ENCODE measurements at regions of chr1 and their contacts with region 1.

Region 1: GRCh38 chr1:115138968-115139367 is 49.7 kb upstream of the TSPAN2 start:
- DNase-seq: peak in 1 of 2 donors; percentile 92
- H3K4me3 ChIP-seq: no peak overlapping the region
- H3K27ac ChIP-seq: no peak overlapping the region
- H3K4me1 ChIP-seq: peaks cover 12% of the 10 kb centered on the region
- H3K27me3 ChIP-seq: no peaks in the 10 kb centered on the region
- CTCF ChIP-seq: peak; percentile 68 to 84 (median 83)
- POLR2A ChIP-seq: no peak

Region 2: DNA sequence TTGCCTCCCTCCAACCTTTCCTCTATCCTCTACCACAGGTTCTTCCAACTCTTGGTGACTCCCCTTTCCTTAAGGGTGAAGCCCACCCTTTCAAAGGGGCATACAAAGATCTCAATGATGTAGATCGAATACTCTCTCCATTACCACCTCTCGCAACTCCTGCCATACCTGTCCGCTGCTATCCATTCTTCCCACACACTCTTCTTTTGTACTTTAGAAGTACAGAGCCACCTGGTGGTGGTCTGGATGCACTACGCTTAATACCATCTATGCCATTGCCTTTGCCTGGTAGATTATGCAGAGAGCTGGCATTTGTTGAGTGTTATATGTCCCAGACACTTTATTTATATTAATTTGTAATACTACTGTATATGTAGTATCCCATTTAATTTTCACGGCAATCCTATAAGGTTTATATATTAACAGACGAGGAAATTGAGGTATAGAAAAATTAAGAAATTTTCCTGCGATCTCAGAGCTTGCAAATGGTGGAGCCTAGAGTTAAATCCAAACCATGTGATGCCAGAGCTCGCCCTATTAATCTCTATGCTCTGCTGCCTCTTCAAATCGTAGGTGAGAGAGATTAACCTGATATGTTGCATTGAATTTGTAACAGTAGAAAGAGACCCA is 86.4 kb before region 1 on chr1:
- intact Hi-C with region 1: no loop called
- DNase-seq: no peak
- H3K4me3 ChIP-seq: no peak overlapping the region
- H3K27ac ChIP-seq: no peak overlapping the region
- H3K4me1 ChIP-seq: peaks cover 7% of the 10 kb centered on the region
- H3K27me3 ChIP-seq: no peaks in the 10 kb centered on the region
- CTCF ChIP-seq: peak; percentile 25 to 61 (median 44)
- POLR2A ChIP-seq: no peak

Region 3: DNA sequence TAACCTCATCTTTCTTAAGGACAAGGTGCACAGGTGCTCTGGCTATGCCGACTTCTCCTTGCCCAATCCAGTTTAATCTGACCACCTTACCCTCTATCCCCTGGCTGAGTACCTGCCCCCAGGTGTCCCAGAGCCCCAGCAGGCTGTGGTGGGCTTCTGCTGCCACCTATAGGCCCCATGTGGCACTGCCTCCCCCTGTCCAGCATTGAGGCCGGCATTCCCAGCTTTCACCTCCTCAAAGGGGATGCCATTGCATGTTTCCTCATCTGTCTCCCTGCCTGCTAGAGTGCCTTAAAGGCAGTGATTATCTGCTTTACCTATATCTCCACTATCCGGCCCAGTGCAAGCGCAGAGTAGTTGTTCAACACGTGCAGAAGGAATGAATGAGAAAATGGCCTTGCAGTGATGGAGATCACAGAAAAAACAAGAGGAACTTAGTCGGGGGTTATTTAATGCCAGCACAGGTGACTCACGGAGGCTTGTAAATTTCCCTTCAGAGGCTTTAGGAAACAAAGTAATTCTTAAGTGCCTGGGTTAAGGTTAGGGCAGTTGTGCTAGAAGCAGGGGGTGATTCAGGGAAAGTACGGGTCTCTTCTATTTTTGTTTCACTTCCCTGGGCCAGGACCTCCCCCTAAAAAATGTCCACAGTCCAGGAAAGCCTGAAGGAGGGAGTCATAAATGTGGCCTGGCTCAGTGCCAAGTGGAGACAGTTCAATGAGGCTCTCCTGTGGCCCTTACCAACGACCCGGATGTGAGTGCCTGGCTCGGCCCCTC is 330.9 kb after region 1 on chr1:
- intact Hi-C with region 1: loop called (anchors 5 kb)
- DNase-seq: peak; percentile 58 to 81
- H3K4me3 ChIP-seq: no peak overlapping the region
- H3K27ac ChIP-seq: no peak overlapping the region
- H3K4me1 ChIP-seq: no peaks in the 10 kb centered on the region
- H3K27me3 ChIP-seq: no peaks in the 10 kb centered on the region
- CTCF ChIP-seq: peak; percentile 40 to 76 (median 65)
- POLR2A ChIP-seq: no peak

Region 4: GRCh38 chr1:115595279-115596079 is 456.5 kb after region 1 on chr1:
- intact Hi-C with region 1: loop called (anchors 2 kb)
- DNase-seq: no peak
- H3K4me3 ChIP-seq: no peak overlapping the region
- H3K27ac ChIP-seq: no peak overlapping the region
- H3K4me1 ChIP-seq: no peaks in the 10 kb centered on the region
- H3K27me3 ChIP-seq: no peaks in the 10 kb centered on the region
- CTCF ChIP-seq: peak; percentile 74 to 89 (median 87)
- POLR2A ChIP-seq: no peak

Region 5: GRCh38 chr1:116039845-116040244 is 900.9 kb after region 1 on chr1:
- intact Hi-C with region 1: loop called (anchors 5 kb)
- DNase-seq: no peak
- H3K4me3 ChIP-seq: no peak overlapping the region
- H3K27ac ChIP-seq: no peak overlapping the region
- H3K4me1 ChIP-seq: no peaks in the 10 kb centered on the region
- H3K27me3 ChIP-seq: no peaks in the 10 kb centered on the region
- CTCF ChIP-seq: no peak
- POLR2A ChIP-seq: no peak

Measured in vagina (tissue), 2 donors.